Pancreas (tissue), 10 donors: ENCODE measurements at regions of chr3 and their contacts with region 1.

Region 1: GRCh38 chr3:107676469-107677309 is 153.9 kb downstream of the BBX start:
- DNase-seq: no peak
- ATAC-seq: peak in 2 of 4 donors; percentile 65
- H3K4me3 ChIP-seq: no peak overlapping the region
- H3K27ac ChIP-seq: no peak overlapping the region
- H3K4me1 ChIP-seq: no peaks in the 10 kb centered on the region
- H3K27me3 ChIP-seq: no peaks in the 10 kb centered on the region
- CTCF ChIP-seq: peak in 2 of 4 donors; percentile 34 to 36

Region 2: DNA sequence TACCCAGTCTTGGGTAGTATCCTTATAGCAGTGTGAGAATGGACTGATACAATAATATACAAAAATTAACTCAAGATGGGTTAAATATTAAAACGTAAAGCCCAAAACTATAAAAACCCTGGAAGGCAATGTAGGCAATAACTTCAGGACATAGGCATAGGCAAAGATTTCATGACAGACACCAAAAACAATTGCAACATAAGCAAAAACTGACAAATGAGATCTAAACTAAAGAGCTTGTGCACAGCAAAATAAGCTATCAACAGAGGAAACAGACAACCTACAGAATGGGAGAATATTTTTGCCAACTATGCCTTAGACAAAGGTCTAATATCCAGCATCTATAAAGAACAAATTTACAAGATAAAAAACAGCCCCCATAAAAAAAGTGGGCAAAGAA is 504.3 kb before region 1 on chr3:
- intact Hi-C with region 1: no loop called
- DNase-seq: no peak
- ATAC-seq: no peak
- H3K4me3 ChIP-seq: no peak overlapping the region
- H3K27ac ChIP-seq: no peak overlapping the region
- H3K4me1 ChIP-seq: no peaks in the 10 kb centered on the region
- H3K27me3 ChIP-seq: no peaks in the 10 kb centered on the region
- CTCF ChIP-seq: no peak

Region 3: GRCh38 chr3:107740992-107741896 is 64.6 kb after region 1 on chr3:
- intact Hi-C with region 1: loop called in 1 of 3 experiments (anchors 10 kb)
- DNase-seq: no peak
- ATAC-seq: peak in 3 of 4 donors; percentile 50 to 55 (median 50)
- H3K4me3 ChIP-seq: no peak overlapping the region
- H3K27ac ChIP-seq: no peak overlapping the region
- H3K4me1 ChIP-seq: no peaks in the 10 kb centered on the region
- H3K27me3 ChIP-seq: no peaks in the 10 kb centered on the region
- CTCF ChIP-seq: peak in 3 of 4 donors; percentile 16 to 27 (median 19)